A673 (cell line): ENCODE measurements at regions of chr16 and their contacts with region 1.

Region 1: GRCh38 chr16:1954209-1954912 is at the start of gene RPL3L:
- DNase-seq: no peak
- H3K4me3 ChIP-seq: no peak within 1 kb of the TSS
- H3K27ac ChIP-seq: no peak within 1 kb of the TSS
- H3K4me1 ChIP-seq: peaks cover 5% of the 10 kb centered on the region
- H3K27me3 ChIP-seq: no peaks in the 10 kb centered on the region
- CTCF ChIP-seq: no peak
- total RNA-seq, gene RPL3L: not detected in 2 replicates

Region 2: DNA sequence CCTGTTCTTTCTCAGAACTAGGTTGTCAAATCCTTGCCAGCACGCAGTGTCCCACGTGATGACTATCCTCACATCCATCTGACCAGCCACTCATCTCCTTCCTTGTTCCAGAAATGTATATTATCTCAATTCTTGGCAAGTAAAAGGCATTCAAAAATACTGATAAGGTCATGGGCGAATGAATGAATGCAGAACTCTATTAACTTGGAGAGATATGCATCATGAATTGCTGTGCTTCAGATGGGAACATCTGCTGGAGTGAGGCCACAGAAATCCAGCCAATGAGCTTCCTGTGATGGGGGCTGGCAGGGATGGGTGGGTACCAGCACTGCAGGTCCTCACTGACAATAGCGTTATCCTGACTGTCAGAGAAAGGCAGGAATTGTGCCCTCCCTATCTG is 108.4 kb before region 1 on chr16:
- CTCF ChIA-PET with region 1: interaction called, 11 read pairs
- POLR2A ChIA-PET with region 1: no interaction called
- intact Hi-C with region 1: no loop called
- DNase-seq: no peak
- H3K4me3 ChIP-seq: no peak overlapping the region
- H3K27ac ChIP-seq: no peak overlapping the region
- H3K4me1 ChIP-seq: no peaks in the 10 kb centered on the region
- H3K27me3 ChIP-seq: peaks cover 8% of the 10 kb centered on the region
- CTCF ChIP-seq: no peak

Region 3: GRCh38 chr16:1932050-1933028 is 22.0 kb before region 1 on chr16:
- CTCF ChIA-PET with region 1: no interaction called
- POLR2A ChIA-PET with region 1: no interaction called
- intact Hi-C with region 1: no loop called
- DNase-seq: no peak
- H3K4me3 ChIP-seq: no peak overlapping the region
- H3K27ac ChIP-seq: no peak overlapping the region
- H3K4me1 ChIP-seq: peaks cover 5% of the 10 kb centered on the region
- H3K27me3 ChIP-seq: no peaks in the 10 kb centered on the region
- CTCF ChIP-seq: no peak; the same call in 1 of the 2 replicates